Gastrocnemius medialis (tissue), 4 donors: ENCODE measurements at regions of chr10 and their contacts with region 1.

Region 1: DNA sequence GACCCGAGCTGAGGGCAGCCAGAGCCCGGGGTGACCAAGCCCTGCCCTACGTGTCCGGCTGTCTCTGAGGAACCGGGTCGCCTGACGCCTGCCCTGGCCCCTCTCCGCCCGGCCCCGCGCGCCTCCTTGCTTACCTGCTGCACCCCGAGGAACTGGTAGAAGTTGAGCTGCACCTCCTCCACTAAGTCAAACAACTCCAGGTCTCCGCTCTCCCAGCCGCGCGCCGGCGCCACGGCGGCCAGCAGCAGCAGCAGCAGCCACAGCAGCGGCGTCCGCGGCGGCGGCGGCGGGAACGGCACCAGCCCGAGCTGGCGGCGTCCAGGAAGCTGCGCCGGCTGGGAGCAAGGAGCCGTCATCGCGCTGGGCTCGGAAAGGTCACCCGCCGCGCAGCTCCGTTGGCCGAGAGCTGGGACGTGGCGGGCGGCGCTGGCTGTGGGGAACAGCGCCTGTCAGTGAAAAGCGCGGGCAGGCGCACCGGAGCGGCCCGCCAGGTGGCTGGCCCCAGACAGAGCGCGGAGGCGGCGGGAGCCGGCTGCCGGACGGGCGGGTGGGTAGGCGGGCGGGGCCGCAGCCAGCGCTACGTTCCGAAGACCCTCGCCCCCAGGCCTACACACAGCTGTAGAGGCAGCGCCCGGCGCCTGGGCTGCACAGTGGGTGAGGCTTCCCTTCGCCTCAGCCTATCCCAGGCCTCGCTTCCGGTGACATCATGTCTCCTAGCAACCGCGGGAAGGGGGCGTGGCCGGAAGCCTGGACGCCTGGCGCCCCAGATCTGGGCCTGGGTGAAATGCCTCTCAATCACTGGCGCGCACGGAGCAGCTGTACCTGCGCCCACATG is at the start of gene DNAJC1:
- DNase-seq: peak; percentile 92 to 97
- ATAC-seq: peak; percentile 97
- H3K4me3 ChIP-seq: peak within 1 kb of the TSS; percentile 74 to 88 (median 84)
- H3K27ac ChIP-seq: peak within 1 kb of the TSS; percentile 82 to 96 (median 94)
- H3K4me1 ChIP-seq: peaks cover 14 to 18% of the 10 kb centered on the region in 2 donors
- H3K27me3 ChIP-seq: no peaks in the 10 kb centered on the region
- CTCF ChIP-seq: peak in 4 of 5 experiments; percentile 5 to 43 (median 26)
- POLR2A ChIP-seq: peak; percentile 85 to 90
- total RNA-seq, gene DNAJC1: 24.1 to 56.4 (median 35.7) TPM

Region 2: DNA sequence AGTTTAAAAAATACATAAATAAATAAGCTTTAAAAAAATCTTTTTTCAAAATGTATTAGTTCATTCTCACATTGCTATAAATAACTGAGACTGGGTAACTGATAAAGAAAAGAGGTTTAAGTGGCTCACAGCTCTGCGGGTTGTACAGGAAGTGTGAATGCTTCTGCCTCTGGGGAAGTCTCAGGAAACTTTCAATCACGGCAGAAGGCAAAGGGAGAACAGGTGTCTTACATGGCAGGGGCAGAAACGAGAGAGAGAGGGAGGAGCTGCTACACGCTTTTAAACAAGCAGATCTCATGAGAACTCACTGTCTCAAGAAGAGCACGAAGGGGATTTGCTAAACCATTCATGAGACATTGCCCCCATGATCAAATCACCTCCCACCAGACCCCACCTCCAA is 114.3 kb before region 1 on chr10:
- in situ Hi-C with region 1: no loop called
- intact Hi-C with region 1: no loop called
- DNase-seq: no peak
- ATAC-seq: no peak
- H3K4me3 ChIP-seq: no peak overlapping the region
- H3K27ac ChIP-seq: no peak overlapping the region
- H3K4me1 ChIP-seq: no peaks in the 10 kb centered on the region
- H3K27me3 ChIP-seq: no peaks in the 10 kb centered on the region
- CTCF ChIP-seq: no peak
- POLR2A ChIP-seq: no peak

Region 3: DNA sequence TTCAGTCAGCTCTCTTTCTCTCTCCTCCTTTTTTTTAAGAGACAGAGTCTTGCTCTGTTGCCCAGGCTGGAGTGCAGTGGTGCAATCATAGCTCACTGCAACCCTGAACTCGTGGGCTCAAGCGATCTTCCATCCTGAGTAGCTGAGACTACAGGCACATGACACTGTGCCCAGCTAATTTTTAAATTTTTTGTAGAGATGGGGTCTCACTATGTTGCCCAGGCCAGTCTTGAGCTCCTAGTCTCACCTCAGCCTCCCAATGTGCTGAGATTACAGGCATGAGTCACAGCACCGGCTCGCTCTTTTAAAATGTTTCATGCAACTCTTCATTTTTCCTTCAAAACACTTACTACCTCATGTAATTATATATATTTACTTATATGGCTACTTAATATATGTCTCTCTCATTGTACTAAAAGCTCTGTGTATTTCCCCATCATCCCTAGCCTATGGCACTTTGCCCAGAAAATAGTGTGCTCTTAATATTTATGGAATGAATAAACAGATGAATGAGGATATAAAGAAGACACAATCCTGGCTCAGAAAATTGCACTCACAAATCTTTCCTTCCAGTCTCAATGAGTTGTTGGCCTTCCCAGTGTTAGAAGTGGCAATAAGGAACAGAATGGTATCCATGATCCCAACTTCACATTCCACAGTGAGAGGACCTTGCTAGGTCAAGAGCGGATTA is 180.6 kb after region 1 on chr10:
- in situ Hi-C with region 1: no loop called
- intact Hi-C with region 1: no loop called
- DNase-seq: no peak
- ATAC-seq: no peak
- H3K4me3 ChIP-seq: no peak overlapping the region
- H3K27ac ChIP-seq: no peak overlapping the region
- H3K4me1 ChIP-seq: no peaks in the 10 kb centered on the region
- H3K27me3 ChIP-seq: no peaks in the 10 kb centered on the region
- CTCF ChIP-seq: no peak
- POLR2A ChIP-seq: no peak

Region 4: DNA sequence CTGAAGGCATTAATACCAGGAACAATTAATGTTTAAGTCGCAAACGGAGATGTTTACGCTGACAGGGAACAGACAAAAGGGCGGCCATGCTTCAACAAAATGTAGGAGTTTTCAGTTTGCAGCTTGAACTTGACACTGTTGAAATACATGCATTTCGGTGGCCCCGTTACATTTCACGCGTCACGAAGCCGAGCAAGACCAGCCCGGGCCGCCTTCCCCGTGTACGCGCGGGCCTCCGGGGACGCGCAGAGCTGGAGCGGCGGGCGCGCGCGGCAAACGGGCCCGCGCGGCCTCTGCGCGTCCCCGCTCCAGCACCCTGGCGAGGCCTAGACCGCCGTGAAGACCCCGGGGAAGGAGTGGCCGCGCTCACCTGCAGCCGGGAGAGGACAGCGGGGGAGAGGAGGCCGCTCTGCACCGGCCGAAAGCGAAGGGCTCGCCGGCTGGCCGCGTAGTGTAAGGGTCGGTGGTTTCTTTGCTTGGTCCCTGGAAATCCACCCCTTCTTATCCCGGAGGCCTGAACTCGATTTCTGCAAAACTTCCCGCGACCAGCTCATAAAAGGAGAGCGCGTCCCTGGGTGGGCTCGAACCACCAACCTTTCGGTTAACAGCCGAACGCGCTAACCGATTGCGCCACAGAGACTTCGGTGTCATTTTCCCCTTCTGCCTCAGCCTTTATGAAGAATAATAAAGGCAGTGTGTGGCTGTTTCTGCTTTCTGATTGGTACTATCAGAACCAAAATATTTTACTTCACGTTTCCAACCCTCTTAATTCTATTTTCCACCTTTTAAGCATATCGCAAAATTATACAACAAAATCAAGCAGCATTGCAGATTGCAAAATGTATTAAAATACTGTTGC is 225.9 kb after region 1 on chr10:
- in situ Hi-C with region 1: loop called in 2 of 4 experiments (anchors 25 kb)
- intact Hi-C with region 1: loop called (anchors 2 kb)
- DNase-seq: peak; percentile 71 to 77
- ATAC-seq: peak; percentile 91 to 92
- H3K4me3 ChIP-seq: peak overlapping the region; percentile 72 to 92 (median 82)
- H3K27ac ChIP-seq: peak overlapping the region; percentile 83 to 95 (median 90)
- H3K4me1 ChIP-seq: peaks cover 3 to 7% of the 10 kb centered on the region in 2 donors
- H3K27me3 ChIP-seq: no peaks in the 10 kb centered on the region
- CTCF ChIP-seq: no peak
- POLR2A ChIP-seq: peak in 1 of 2 donors; percentile 14

Region 5: DNA sequence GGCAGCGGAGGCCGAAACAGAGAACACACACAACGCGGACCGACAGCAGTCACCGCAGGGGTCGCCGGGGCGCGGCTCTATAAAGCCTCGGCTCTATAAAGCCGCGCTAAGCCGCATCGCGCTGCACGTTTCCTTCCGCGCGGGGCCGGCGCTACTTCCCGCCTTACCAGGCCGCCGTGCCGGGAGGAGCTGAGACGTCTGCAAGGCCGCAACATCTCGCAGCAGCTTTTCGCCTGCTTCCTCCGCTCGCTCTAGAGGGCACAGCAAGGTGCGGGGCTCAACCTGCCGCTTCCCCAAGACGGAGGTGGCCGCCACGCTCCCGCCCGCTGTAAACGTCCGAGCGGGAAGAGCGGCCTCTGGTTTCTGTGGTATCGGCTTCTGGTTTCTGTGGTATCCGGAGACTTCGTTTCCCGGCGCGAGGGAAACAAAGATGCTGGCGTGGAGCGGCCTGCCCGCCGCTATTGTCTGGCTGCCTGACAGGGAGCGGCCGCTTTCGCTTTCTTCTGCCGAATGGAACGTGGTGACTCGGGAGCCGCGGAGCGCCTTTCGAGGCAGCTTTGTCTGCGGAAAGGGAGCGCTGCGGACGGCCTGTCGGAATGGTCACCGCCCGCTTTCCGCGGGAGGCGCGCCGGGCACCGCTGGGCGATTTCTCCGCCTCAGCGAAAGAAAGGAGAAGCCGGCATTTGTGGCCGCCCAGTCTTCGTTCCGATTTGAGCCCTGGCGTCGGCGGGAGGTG is 433.8 kb after region 1 on chr10:
- in situ Hi-C with region 1: loop called in 1 of 4 experiments (anchors 10 kb)
- intact Hi-C with region 1: loop called (anchors 5 kb)
- DNase-seq: peak; percentile 69 to 86
- ATAC-seq: peak; percentile 79 to 89
- H3K4me3 ChIP-seq: peak overlapping the region; percentile 70 to 95 (median 78)
- H3K27ac ChIP-seq: peak overlapping the region; percentile 86 to 95 (median 86)
- H3K4me1 ChIP-seq: peaks cover 12 to 19% of the 10 kb centered on the region in 2 donors
- H3K27me3 ChIP-seq: no peaks in the 10 kb centered on the region
- CTCF ChIP-seq: no peak
- POLR2A ChIP-seq: peak; percentile 71 to 76

Region 6: DNA sequence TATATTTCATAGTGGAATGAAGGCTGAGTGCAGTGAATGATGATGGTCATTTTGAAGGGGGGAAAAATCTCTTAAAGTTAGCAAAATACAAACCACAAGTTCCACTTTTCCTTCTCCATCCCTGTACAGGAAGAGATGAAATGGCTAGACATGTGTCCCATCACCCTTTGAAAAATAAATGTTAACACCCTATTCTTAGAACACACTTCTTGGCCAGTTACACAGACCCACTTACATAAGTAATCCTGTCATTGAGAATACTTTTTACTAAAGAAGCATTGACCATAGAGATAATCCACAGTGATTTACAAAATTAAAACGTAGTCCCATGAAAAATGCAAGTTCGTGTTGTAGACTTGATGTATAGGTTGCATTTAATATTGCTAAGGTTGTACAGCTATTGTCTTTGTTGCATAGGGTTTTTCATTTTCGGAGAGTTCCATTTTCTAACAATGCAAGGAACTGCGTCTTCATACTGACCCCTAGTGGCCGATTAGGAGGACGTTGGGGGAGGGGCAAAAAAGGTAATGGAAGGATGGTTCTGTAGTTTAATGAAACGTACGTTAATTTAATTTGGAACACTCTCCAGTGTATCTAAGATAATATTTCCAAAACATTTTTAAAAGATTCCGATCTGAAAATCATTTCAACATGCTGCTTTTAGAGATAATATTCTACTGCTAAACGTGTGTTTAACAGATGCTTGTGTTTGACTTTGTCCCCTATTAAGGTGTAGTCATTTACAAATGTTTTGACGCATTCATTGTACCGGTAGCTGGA is 985.5 kb after region 1 on chr10:
- in situ Hi-C with region 1: loop called in 3 of 4 experiments (anchors 10 to 25 kb)
- intact Hi-C with region 1: loop called (anchors 5 kb)
- DNase-seq: peak; percentile 32 to 35
- ATAC-seq: peak; percentile 71 to 77
- H3K4me3 ChIP-seq: no peak overlapping the region
- H3K27ac ChIP-seq: no peak overlapping the region
- H3K4me1 ChIP-seq: peaks cover 0 to 4% of the 10 kb centered on the region in 2 donors
- H3K27me3 ChIP-seq: no peaks in the 10 kb centered on the region
- CTCF ChIP-seq: peak; percentile 78 to 90 (median 85)
- POLR2A ChIP-seq: no peak